ENCODE measurements at regions of chr10 and their contacts with region 1.

Region 1: GRCh38 chr10:116289652-116290051 is 16.6 kb upstream of the GFRA1 start:
- DNase-seq: no peak
- ATAC-seq: no peak
- H3K4me3 ChIP-seq: no peak overlapping the region
- H3K4me3 Mint-ChIP-seq: no peak overlapping the region
- H3K27ac ChIP-seq: no peak overlapping the region
- H3K27ac Mint-ChIP-seq: no peak overlapping the region
- H3K4me1 ChIP-seq: peaks cover 0 to 2% of the 10 kb centered on the region in 2 experiments
- H3K4me1 Mint-ChIP-seq: no peaks in the 10 kb centered on the region
- H3K27me3 ChIP-seq: no peaks in the 10 kb centered on the region
- H3K27me3 Mint-ChIP-seq: peaks cover 0 to 6% of the 10 kb centered on the region in 2 donors

Region 2: GRCh38 chr10:115118346-115118745 is 1171.3 kb before region 1 on chr10:
- CTCF ChIA-PET with region 1: no interaction called
- POLR2A ChIA-PET with region 1: no interaction called
- DNase-seq: no peak
- ATAC-seq: no peak
- H3K4me3 ChIP-seq: no peak overlapping the region
- H3K4me3 Mint-ChIP-seq: no peak overlapping the region
- H3K27ac ChIP-seq: no peak overlapping the region
- H3K27ac Mint-ChIP-seq: no peak overlapping the region
- H3K4me1 ChIP-seq: no peaks in the 10 kb centered on the region
- H3K4me1 Mint-ChIP-seq: no peaks in the 10 kb centered on the region
- H3K27me3 ChIP-seq: peaks cover 0 to 2% of the 10 kb centered on the region in 2 experiments
- H3K27me3 Mint-ChIP-seq: peaks cover 5 to 7% of the 10 kb centered on the region in 2 donors

Region 3: GRCh38 chr10:115777646-115778045 is 512.0 kb before region 1 on chr10:
- CTCF ChIA-PET with region 1: interaction called in 1 of 2 experiments, 14 read pairs
- POLR2A ChIA-PET with region 1: no interaction called
- DNase-seq: no peak
- ATAC-seq: no peak
- H3K4me3 ChIP-seq: no peak overlapping the region
- H3K4me3 Mint-ChIP-seq: no peak overlapping the region
- H3K27ac ChIP-seq: no peak overlapping the region
- H3K27ac Mint-ChIP-seq: no peak overlapping the region
- H3K4me1 ChIP-seq: no peaks in the 10 kb centered on the region
- H3K4me1 Mint-ChIP-seq: no peaks in the 10 kb centered on the region
- H3K27me3 ChIP-seq: no peaks in the 10 kb centered on the region
- H3K27me3 Mint-ChIP-seq: no peaks in the 10 kb centered on the region

Measured in T-cell (primary cell).